Caco-2 (cell line): ENCODE measurements at regions of chr9 and their contacts with region 1.

Region 1: DNA sequence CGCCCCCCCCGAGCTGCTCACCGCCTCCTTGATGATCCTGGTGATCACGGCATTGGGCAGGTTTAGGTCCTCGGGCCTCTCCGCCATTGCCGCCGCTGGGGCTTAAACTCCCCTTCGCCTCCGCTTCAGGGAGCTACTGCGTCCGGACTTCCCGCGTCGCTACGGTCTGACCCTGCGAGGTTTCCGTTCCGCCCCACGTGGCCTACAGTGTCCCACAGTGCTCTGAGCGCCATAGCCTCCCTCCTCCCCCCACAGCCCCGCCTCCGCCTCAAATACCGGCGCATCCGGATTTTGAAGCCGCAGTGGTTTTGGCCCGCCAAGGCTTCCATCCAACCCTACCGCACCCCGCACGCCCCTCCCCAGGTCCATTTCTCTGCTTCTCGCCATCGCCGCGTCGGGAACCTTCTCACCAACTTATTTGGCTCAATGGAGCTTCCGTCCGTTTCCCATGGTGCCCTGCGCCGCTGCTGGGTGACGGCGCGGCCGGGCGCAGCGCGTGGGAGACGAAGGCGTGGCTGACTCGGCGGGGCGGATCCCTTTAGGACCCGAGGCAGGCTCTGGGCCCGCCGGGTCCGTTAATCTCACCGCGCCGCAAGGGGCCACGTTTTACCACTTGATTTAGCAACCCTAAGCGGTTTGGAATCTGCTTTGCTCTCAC is at the starts of genes C9orf43 and POLE3:
- DNase-seq: peak; percentile 95
- H3K4me3 ChIP-seq: peak within 1 kb of the TSS; percentile 89
- H3K4me3 Mint-ChIP-seq: peak within 1 kb of the TSS; percentile 88
- H3K27ac Mint-ChIP-seq: peak within 1 kb of the TSS; percentile 98
- H3K4me1 ChIP-seq: peaks cover 3% of the 10 kb centered on the region; the same call in 1 of the 2 replicates
- H3K4me1 Mint-ChIP-seq: peaks cover 20% of the 10 kb centered on the region
- H3K27me3 ChIP-seq: no peaks in the 10 kb centered on the region
- H3K27me3 Mint-ChIP-seq: no peaks in the 10 kb centered on the region
- CTCF ChIP-seq: no peak
- total RNA-seq, gene C9orf43: 1.1 and 1.9 TPM in 2 replicates
- total RNA-seq, gene POLE3: 48.8 and 57.2 TPM in 2 replicates

Region 2: GRCh38 chr9:113275157-113276131 is 134.9 kb before region 1 on chr9 and contains the starts of genes CDC26 and PRPF4:
- CTCF ChIA-PET with region 1: interaction called, 6 read pairs
- POLR2A ChIA-PET with region 1: interaction called, 15 read pairs
- intact Hi-C with region 1: loop called (anchors 1 kb)
- DNase-seq: peak; percentile 97 to 98
- H3K4me3 ChIP-seq: peak within 1 kb of the TSS; percentile 93
- H3K4me3 Mint-ChIP-seq: no peak within 1 kb of the TSS
- H3K27ac Mint-ChIP-seq: no peak within 1 kb of the TSS
- H3K4me1 ChIP-seq: no peaks in the 10 kb centered on the region
- H3K4me1 Mint-ChIP-seq: no peaks in the 10 kb centered on the region
- H3K27me3 ChIP-seq: no peaks in the 10 kb centered on the region
- H3K27me3 Mint-ChIP-seq: no peaks in the 10 kb centered on the region
- CTCF ChIP-seq: no peak
- total RNA-seq, gene CDC26: 27.3 and 29.3 TPM in 2 replicates
- total RNA-seq, gene PRPF4: 37.5 and 38.6 TPM in 2 replicates

Region 3: DNA sequence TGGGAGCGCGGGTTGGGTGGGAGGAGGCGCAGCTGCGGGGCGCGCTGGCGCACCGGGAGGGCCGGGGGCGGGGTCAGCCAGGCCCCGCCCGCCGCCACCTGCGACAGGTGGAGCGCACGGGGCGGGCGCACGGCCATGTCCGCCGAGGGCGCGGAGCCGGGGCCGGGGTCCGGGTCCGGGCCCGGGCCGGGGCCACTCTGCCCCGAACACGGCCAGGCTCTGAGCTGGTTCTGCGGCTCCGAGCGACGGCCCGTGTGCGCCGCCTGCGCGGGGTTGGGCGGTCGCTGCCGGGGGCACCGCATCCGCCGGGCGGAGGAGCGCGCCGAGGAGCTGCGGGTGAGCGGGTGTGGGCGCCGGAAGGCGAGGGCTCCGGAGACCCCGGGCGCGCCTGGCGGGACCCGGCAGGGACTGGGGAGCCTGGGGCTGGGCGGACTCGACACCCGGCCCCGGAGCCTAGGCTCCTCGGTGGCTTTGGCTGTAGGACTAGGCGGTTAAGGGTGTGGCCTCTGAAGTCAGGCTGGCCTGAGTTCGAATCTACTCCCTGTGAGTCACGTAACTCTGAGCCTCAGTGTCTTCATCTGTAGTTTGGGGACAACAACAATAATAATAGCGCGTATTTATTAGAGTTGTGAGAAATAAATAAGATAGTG is 60.8 kb before region 1 on chr9 and contains the start of gene BSPRY:
- CTCF ChIA-PET with region 1: no interaction called
- POLR2A ChIA-PET with region 1: interaction called, 7 read pairs
- intact Hi-C with region 1: loop called (anchors 2 kb)
- DNase-seq: peak in 1 of 2 experiments; percentile 69
- H3K4me3 ChIP-seq: peak within 1 kb of the TSS; percentile 85
- H3K4me3 Mint-ChIP-seq: peak within 1 kb of the TSS; percentile 72
- H3K27ac Mint-ChIP-seq: no peak within 1 kb of the TSS
- H3K4me1 ChIP-seq: no peaks in the 10 kb centered on the region
- H3K4me1 Mint-ChIP-seq: peaks cover 12% of the 10 kb centered on the region
- H3K27me3 ChIP-seq: no peaks in the 10 kb centered on the region
- H3K27me3 Mint-ChIP-seq: no peaks in the 10 kb centered on the region
- CTCF ChIP-seq: no peak
- total RNA-seq, gene BSPRY: 14.5 and 14.7 TPM in 2 replicates

Region 4: GRCh38 chr9:113376634-113377567 is 33.4 kb before region 1 on chr9 and contains the start of gene HDHD3:
- CTCF ChIA-PET with region 1: interaction called, 5 read pairs
- POLR2A ChIA-PET with region 1: interaction called, 4 read pairs
- intact Hi-C with region 1: loop called (anchors 1 kb)
- DNase-seq: peak; percentile 82 to 87
- H3K4me3 ChIP-seq: peak within 1 kb of the TSS; percentile 96
- H3K4me3 Mint-ChIP-seq: peak within 1 kb of the TSS; percentile 77
- H3K27ac Mint-ChIP-seq: peak within 1 kb of the TSS; percentile 86
- H3K4me1 ChIP-seq: peaks cover 51% of the 10 kb centered on the region
- H3K4me1 Mint-ChIP-seq: peaks cover 26% of the 10 kb centered on the region
- H3K27me3 ChIP-seq: no peaks in the 10 kb centered on the region
- H3K27me3 Mint-ChIP-seq: no peaks in the 10 kb centered on the region
- CTCF ChIP-seq: no peak
- total RNA-seq, gene HDHD3: 60.9 and 64.9 TPM in 2 replicates

Region 5: DNA sequence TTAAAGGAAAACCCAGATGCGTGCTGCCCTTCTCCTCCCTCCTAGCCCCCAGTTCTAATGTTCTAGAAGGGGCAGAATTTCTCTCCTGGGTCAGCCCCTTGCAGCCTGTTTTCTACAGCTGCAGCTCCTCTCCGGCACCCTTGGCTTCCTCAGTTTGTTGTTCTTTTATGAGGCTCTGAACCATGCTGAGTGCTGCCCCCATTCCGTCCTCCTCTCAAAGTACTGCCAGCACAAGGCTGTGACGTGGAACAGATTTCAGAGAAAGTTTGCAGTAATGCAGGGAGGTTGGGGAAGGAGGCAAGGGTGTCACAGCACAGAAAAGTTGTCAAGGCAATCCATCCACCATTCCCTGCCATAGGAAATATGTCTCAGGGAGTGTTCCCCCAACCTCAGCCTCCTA is 116.5 kb after region 1 on chr9:
- CTCF ChIA-PET with region 1: no interaction called
- POLR2A ChIA-PET with region 1: no interaction called
- intact Hi-C with region 1: no loop called
- DNase-seq: no peak
- H3K4me3 ChIP-seq: no peak overlapping the region
- H3K4me3 Mint-ChIP-seq: no peak overlapping the region
- H3K27ac Mint-ChIP-seq: peak overlapping the region; percentile 66
- H3K4me1 ChIP-seq: peaks cover 31% of the 10 kb centered on the region
- H3K4me1 Mint-ChIP-seq: peaks cover 22% of the 10 kb centered on the region
- H3K27me3 ChIP-seq: no peaks in the 10 kb centered on the region
- H3K27me3 Mint-ChIP-seq: no peaks in the 10 kb centered on the region
- CTCF ChIP-seq: no peak

Region 6: DNA sequence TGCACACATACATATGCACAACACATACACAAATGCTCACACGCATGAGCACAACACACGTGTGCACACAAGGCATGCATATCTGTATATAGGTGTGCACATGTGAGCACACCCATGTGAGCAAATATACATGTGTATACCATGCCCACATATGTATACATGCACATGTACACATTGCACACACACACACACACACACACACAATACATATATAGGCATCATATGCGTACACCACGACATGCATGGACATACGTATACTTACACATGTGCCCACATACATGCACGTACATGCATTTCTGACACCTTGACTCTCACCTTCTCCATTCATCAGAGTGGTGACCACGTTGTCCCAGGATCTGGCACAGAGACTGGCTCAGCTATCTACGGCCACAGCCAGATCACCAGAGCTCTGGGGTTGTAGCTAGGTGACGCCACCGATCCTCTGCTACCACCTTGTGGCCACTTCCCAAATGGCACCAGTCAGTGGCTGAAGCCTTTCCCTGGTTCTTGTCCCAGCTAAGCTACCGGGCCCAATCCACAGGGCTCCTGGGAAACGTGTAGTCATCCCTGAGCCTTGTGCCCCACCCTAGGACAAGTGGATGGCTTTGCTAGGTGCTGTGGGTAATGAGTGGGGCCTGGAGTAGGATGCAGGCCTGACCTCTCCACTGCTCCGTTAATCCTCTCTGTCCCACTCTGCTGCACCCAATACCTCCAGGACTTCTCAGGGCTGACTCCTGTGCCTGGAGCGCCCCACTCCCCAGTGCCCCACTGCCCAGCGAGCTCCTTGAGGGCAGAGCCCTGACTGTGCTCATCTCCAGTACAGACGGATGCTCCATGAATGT is 247.6 kb after region 1 on chr9:
- CTCF ChIA-PET with region 1: interaction called, 15 read pairs
- POLR2A ChIA-PET with region 1: no interaction called
- intact Hi-C with region 1: loop called (anchors 1 kb)
- DNase-seq: peak; percentile 84 to 87
- H3K4me3 ChIP-seq: no peak overlapping the region
- H3K4me3 Mint-ChIP-seq: no peak overlapping the region
- H3K27ac Mint-ChIP-seq: no peak overlapping the region
- H3K4me1 ChIP-seq: no peaks in the 10 kb centered on the region; the same call in 1 of the 2 replicates
- H3K4me1 Mint-ChIP-seq: no peaks in the 10 kb centered on the region
- H3K27me3 ChIP-seq: no peaks in the 10 kb centered on the region
- H3K27me3 Mint-ChIP-seq: peaks cover 7% of the 10 kb centered on the region
- CTCF ChIP-seq: peak; percentile 93 to 97